Uterus (tissue), 4 donors: ENCODE measurements at regions of chr5 and their contacts with region 1.

Region 1: DNA sequence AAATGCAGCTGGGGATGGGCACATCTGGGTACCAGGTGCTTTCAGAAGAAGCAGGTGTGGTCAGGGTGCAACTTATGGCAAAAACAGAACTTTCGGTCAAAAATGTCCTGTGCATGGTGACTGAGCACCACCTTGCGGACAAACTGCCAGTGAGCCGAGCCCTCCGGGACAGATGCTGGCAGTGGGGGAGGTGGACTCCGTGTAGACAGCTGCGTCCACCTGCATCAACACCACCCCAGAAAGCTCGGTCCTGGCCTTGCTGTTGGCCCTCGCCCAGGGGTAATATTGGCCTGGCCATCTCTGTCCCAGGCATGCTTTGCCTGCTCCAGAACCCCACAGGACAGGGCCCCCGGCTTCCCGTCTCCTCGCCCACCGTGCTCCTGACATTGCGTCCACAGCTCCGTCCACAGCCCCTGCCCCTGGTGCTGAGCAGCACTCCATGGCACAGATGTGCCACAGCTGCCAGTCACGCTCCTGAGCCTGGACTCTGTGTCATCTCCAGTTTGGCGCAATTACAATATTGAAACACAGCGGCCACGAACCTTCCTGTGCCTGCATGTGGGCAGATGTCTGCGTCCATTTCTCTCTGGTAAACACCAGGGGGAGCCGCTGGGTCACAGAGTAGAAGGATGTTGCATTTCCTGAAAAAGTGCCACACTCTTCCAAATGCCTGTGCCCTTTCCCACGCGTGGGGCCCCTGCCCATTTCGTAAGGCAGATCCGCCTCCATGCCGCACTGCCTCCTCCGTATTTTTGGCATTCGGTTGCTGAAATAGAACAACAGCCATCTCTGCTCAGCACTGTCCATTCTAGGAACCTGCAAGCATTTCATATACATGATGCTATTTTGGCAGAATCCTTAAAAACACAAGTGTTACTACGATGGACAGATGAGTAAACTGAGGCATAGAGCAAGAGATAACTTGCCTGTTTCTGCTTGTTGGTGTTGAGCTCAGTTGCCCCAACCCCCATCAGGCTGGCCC is 33.4 kb upstream of the SLC6A19 start:
- DNase-seq: peak; percentile 58 to 59
- H3K4me3 ChIP-seq: no peak overlapping the region
- H3K27ac ChIP-seq: no peak overlapping the region
- H3K4me1 ChIP-seq: no peaks in the 10 kb centered on the region
- H3K27me3 ChIP-seq: no peaks in the 10 kb centered on the region
- CTCF ChIP-seq: peak; percentile 53 to 77 (median 60)
- POLR2A ChIP-seq: no peak

Region 2: DNA sequence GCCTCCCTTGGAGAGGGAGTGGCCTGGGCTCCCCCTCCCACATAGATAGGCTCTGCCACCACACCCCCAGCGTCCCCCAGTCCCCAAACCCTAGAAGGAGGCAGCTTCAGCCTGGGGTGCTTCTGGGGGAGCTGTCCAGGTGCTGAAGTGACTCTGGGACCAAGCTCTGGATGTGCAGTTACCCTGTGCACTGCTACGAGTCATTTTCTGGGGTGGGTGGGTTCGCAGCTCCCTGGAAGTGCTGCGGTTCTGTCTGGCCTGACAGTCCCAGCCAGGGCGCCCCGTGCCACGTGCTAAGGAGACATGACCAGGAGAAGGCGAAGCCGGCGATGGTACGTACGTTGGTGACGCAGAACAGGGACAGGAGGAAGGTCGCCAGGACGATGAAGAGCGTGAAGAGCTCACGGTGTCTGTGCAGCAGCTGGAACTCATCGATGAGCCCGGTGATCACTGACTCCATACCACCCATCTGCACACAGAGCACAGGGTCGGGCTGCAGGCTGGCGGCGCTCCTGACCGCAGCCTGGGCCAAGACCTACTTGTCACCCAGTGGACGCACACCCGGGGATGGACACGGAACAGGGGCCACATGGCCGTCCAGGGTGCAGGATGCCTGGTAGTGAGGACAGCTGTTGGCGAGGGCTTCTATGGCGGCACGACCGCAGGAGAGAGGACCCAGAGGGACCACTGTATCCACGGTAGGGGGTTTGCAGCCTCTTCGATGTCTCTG is 241.5 kb after region 1 on chr5:
- intact Hi-C with region 1: no loop called
- DNase-seq: no peak
- H3K4me3 ChIP-seq: no peak overlapping the region
- H3K27ac ChIP-seq: no peak overlapping the region
- H3K4me1 ChIP-seq: no peaks in the 10 kb centered on the region
- H3K27me3 ChIP-seq: no peaks in the 10 kb centered on the region
- CTCF ChIP-seq: no peak
- POLR2A ChIP-seq: no peak

Region 3: DNA sequence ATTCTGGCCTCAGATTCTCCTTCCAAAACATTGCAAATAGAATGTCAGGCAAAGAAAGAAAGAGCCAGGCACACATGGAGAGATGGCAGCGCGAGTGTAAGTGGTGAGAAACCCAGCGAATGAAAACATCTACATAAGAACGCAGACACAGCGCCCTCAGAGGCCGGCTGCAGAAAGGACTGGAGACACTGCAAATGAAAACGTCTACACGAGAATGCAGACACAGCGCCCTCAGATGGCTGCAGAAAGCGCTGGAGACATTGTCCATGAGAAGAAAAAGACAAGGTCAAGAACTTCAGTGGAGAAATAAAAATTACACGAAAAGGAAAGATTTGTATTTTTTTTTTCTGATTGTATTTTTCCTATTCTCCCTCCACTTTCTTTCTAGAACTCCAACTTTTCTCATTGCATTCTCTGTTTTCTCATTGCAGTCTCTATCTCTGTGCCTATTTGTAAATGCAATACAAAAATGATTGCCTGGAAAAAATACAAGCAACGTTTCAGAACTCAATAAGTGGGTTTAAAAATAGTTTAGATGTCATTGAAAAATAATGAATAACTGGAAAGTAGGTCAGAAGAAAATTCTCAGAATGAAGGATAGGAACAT is 473.6 kb after region 1 on chr5:
- intact Hi-C with region 1: loop called (anchors 10 kb)
- DNase-seq: peak; percentile 56 to 58
- H3K4me3 ChIP-seq: no peak overlapping the region
- H3K27ac ChIP-seq: no peak overlapping the region
- H3K4me1 ChIP-seq: no peaks in the 10 kb centered on the region
- H3K27me3 ChIP-seq: peaks cover 8 to 19% of the 10 kb centered on the region in 2 donors
- CTCF ChIP-seq: peak; percentile 60 to 71 (median 66)
- POLR2A ChIP-seq: no peak